K562 (cell line): ENCODE measurements at regions of chrX and their contacts with region 1.

Region 1: DNA sequence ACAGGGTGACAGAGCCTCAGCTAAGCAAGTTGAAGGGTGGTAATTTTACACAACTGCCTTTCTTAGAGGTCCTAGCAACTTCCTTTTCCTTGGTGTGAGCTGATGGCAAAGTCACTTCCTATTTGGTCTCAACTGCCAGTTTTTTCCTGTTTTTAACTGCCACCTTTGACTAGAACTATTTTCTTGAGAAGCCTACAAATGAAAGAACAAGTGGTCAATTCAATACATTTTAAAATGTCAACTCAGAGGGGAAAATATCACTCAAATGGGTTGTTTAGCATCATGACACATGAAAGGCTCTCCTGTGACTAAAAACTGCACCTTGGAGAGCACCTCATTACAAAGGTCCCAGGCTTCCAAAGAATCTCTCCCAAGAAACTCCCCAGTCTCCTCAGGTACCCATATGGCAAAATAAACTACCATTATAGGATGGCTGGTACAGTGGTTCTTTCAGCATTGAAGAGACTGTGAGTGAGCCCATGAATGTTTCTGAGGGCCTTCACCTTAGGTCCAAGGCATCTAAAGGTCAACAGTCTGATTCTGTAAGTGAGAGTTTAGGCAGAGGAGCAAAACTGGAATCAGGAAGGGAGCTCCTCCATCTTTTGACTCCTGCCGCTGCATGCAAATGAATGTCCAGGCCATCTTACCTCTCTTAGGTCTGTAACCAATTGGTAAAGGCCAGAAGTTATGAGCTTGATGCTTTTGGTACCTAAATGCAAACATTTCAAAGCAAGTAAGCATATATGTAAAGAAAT is 5.5 kb upstream of the STK26 start:
- DNase-seq: peak in 1 of 4 experiments; percentile 12
- ATAC-seq: peak; percentile 22
- H3K4me3 ChIP-seq: no peak overlapping the region
- H3K27ac ChIP-seq: peak overlapping the region; percentile 79
- H3K4me1 ChIP-seq: peaks cover 8 to 36% of the 10 kb centered on the region in 2 experiments; a peak in 4 of 5 replicates
- H3K27me3 ChIP-seq: no peaks in the 10 kb centered on the region
- CTCF ChIP-seq: no peak
- EP300 ChIP-seq: no peak
- POLR2A ChIP-seq: no peak
- RAD21 ChIP-seq: no peak

Region 2: DNA sequence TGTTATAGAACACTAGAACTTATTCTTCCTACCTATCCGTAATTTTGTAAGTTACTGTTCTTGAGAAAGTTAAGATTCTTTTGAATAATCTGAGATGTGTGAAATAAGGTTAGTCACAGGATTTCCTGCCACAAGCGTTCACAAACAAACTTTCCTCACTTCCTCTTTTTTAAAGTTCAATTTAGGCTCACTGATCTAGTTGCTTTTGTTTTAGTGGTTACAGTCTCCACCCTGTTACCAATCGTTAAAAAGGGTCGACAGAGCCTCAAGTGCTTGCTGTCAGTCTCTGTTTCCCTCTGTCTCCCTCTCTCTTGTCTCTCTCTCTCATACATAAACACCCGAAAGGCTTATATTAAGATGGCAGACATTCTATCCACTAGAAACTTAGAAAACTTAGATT is 30.4 kb before region 1 on chrX:
- CTCF ChIA-PET with region 1: no interaction called
- POLR2A ChIA-PET with region 1: no interaction called
- in situ Hi-C with region 1: no loop called
- intact Hi-C with region 1: loop called (anchors 2 kb)
- DNase-seq: peak in 1 of 4 experiments; percentile 36
- ATAC-seq: peak; percentile 38
- H3K4me3 ChIP-seq: no peak overlapping the region
- H3K27ac ChIP-seq: peak overlapping the region; percentile 82
- H3K4me1 ChIP-seq: peaks cover 7 to 34% of the 10 kb centered on the region in 2 experiments; a peak in 4 of 5 replicates
- H3K27me3 ChIP-seq: no peaks in the 10 kb centered on the region
- CTCF ChIP-seq: no peak
- EP300 ChIP-seq: no peak
- POLR2A ChIP-seq: no peak
- RAD21 ChIP-seq: no peak

Region 3: DNA sequence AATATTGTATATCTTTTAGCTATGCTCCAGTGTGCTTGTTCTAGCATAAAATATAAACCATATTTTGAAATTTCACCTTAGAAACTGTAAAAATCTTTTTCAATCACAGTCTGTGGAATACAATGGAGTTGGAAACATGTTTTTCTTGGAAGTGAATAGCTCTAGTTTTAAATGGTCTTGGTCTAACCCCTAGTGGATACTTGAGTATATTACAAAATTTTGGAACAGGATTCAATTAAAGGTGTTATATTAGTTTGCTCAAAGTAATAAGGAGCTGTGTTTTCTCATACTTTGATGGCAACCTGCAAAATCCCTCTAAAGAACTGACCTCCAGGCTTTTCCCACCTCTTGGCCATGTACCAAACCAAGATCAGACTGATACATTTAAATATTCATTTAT is 53.7 kb after region 1 on chrX:
- CTCF ChIA-PET with region 1: no interaction called
- POLR2A ChIA-PET with region 1: no interaction called
- in situ Hi-C with region 1: no loop called
- intact Hi-C with region 1: loop called (anchors 2 kb)
- DNase-seq: peak in 3 of 4 experiments; percentile 7 to 14 (median 10)
- ATAC-seq: peak; percentile 64
- H3K4me3 ChIP-seq: no peak overlapping the region
- H3K27ac ChIP-seq: no peak overlapping the region
- H3K4me1 ChIP-seq: no peaks in the 10 kb centered on the region
- H3K27me3 ChIP-seq: no peaks in the 10 kb centered on the region
- CTCF ChIP-seq: peak in 2 of 3 experiments; percentile 22 to 52; a peak in 3 of 6 replicates
- EP300 ChIP-seq: no peak
- POLR2A ChIP-seq: no peak
- RAD21 ChIP-seq: peak; percentile 35 to 61

Region 4: DNA sequence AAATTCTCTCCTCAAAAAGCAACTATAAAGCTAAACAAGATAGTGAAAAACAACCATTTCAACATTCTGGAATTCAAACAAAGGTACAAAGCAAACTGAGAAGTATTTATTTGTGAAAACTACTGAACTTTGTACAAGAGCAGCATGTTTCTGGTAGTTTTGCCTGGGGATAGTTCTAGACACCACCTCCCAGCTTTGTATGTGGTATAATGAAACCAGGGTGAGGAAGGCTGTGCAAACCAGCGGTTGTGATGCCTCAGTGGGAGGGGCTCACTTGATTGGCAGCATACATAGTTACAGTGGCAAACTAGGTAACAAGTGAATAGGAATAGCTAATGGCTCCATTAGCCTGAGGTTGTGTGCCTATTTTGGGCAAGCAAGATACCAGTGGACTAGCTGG is 128.9 kb after region 1 on chrX:
- CTCF ChIA-PET with region 1: no interaction called
- POLR2A ChIA-PET with region 1: no interaction called
- in situ Hi-C with region 1: no loop called
- intact Hi-C with region 1: no loop called
- DNase-seq: no peak
- ATAC-seq: no peak
- H3K4me3 ChIP-seq: no peak overlapping the region
- H3K27ac ChIP-seq: no peak overlapping the region
- H3K4me1 ChIP-seq: no peaks in the 10 kb centered on the region
- H3K27me3 ChIP-seq: no peaks in the 10 kb centered on the region
- CTCF ChIP-seq: no peak
- EP300 ChIP-seq: no peak
- POLR2A ChIP-seq: no peak
- RAD21 ChIP-seq: no peak